HepG2 (cell line): ENCODE measurements at regions of chr2 and their contacts with region 1.

Region 1: GRCh38 chr2:29841386-29842004 is 79.9 kb downstream of the ALK start:
- DNase-seq: peak; percentile 30
- ATAC-seq: peak; percentile 78
- H3K4me3 ChIP-seq: no peak overlapping the region
- H3K27ac ChIP-seq: no peak overlapping the region
- H3K4me1 ChIP-seq: no peaks in the 10 kb centered on the region
- H3K27me3 ChIP-seq: peaks cover 0 to 25% of the 10 kb centered on the region in 2 experiments; a peak in 2 of 5 replicates
- CTCF ChIP-seq: peak; percentile 73
- EP300 ChIP-seq: no peak
- POLR2A ChIP-seq: no peak
- RAD21 ChIP-seq: no peak; the same call in 1 of the 2 replicates

Region 2: GRCh38 chr2:28981016-28981441 is 860.5 kb before region 1 on chr2 and contains the start of gene TOGARAM2:
- CTCF ChIA-PET with region 1: interaction called, 3 read pairs
- POLR2A ChIA-PET with region 1: no interaction called
- in situ Hi-C with region 1: loop called (anchors 25 kb)
- intact Hi-C with region 1: no loop called
- DNase-seq: peak; percentile 23
- ATAC-seq: peak; percentile 76
- H3K4me3 ChIP-seq: no peak within 1 kb of the TSS; a peak in 1 of 6 replicates
- H3K27ac ChIP-seq: no peak within 1 kb of the TSS
- H3K4me1 ChIP-seq: peaks cover 5% of the 10 kb centered on the region; the same call in 1 of the 2 replicates
- H3K27me3 ChIP-seq: peaks cover 4 to 42% of the 10 kb centered on the region in 2 experiments; a peak in 3 of 5 replicates
- CTCF ChIP-seq: 0 out of 2 replicates have a peak, but pooled peaks have one; percentile 19
- EP300 ChIP-seq: no peak
- POLR2A ChIP-seq: no peak
- RAD21 ChIP-seq: no peak
- total RNA-seq, gene TOGARAM2: under 0.01 TPM in 1 of 2 replicates, not detected in the other